ENCODE measurements at regions of chr17 and their contacts with region 1.

Region 1: GRCh38 chr17:12545877-12546513 is 119.7 kb upstream of the MYOCD start:
- DNase-seq: peak in 3 of 5 donors; percentile 28 to 47 (median 30)
- ATAC-seq: peak in 3 of 4 donors; percentile 77 to 88 (median 80)
- H3K4me3 ChIP-seq: no peak overlapping the region
- H3K27ac ChIP-seq: no peak overlapping the region
- H3K4me1 ChIP-seq: peaks cover 0 to 10% (median 0%) of the 10 kb centered on the region in 12 donors
- H3K27me3 ChIP-seq: no peaks in the 10 kb centered on the region
- CTCF ChIP-seq: peak; percentile 51 to 79 (median 70)
- POLR2A ChIP-seq: no peak

Region 2: GRCh38 chr17:12256380-12256995 is 289.5 kb before region 1 on chr17:
- intact Hi-C with region 1: loop called in 7 of 10 experiments (anchors 5 to 10 kb)
- DNase-seq: peak in 3 of 5 donors; percentile 26 to 43 (median 29)
- ATAC-seq: peak; percentile 54 to 79 (median 72)
- H3K4me3 ChIP-seq: no peak overlapping the region
- H3K27ac ChIP-seq: peak overlapping the region in 1 of 12 donors; percentile 2
- H3K4me1 ChIP-seq: peaks cover 0 to 21% (median 0%) of the 10 kb centered on the region in 12 donors
- H3K27me3 ChIP-seq: no peaks in the 10 kb centered on the region
- CTCF ChIP-seq: peak; percentile 65 to 81 (median 75)
- POLR2A ChIP-seq: no peak

Region 3: DNA sequence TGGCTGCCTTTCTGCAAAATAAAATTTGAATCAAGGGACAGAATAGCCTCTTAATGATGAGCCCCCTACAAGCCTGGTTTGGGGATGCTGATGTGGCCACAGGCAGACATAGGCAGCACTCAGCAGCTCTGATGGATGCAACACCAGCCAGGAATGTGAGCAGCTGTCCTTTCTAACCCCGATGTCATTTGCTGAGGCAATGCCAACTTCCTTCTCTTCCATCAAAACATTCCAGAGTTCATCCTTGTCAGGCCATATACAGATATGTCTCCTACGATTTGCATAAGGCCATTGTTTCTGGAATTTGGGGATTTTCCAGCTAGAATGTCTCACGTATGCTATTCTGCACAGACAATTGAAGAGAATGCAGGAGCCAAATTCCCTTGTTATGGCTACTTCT is 67.6 kb after region 1 on chr17:
- intact Hi-C with region 1: loop called in 1 of 10 experiments (anchors 10 kb)
- DNase-seq: no peak
- ATAC-seq: no peak
- H3K4me3 ChIP-seq: no peak overlapping the region
- H3K27ac ChIP-seq: no peak overlapping the region
- H3K4me1 ChIP-seq: no peaks in the 10 kb centered on the region
- H3K27me3 ChIP-seq: no peaks in the 10 kb centered on the region
- CTCF ChIP-seq: no peak
- POLR2A ChIP-seq: no peak

Region 4: GRCh38 chr17:12627177-12627629 is 81.2 kb after region 1 on chr17:
- intact Hi-C with region 1: loop called in 1 of 10 experiments (anchors 10 kb)
- DNase-seq: peak in 3 of 5 donors; percentile 23 to 44 (median 32)
- ATAC-seq: peak in 3 of 4 donors; percentile 73 to 84 (median 84)
- H3K4me3 ChIP-seq: no peak overlapping the region
- H3K27ac ChIP-seq: peak overlapping the region in 8 of 12 donors; percentile 28 to 65 (median 45)
- H3K4me1 ChIP-seq: peaks cover 0 to 26% (median 0%) of the 10 kb centered on the region in 12 donors
- H3K27me3 ChIP-seq: no peaks in the 10 kb centered on the region
- CTCF ChIP-seq: no peak
- POLR2A ChIP-seq: no peak

Region 5: GRCh38 chr17:12673788-12674187 is 127.8 kb after region 1 on chr17:
- intact Hi-C with region 1: loop called in 2 of 10 experiments (anchors 2 to 5 kb)
- DNase-seq: no peak
- ATAC-seq: peak in 2 of 4 donors; percentile 43 to 57
- H3K4me3 ChIP-seq: no peak overlapping the region
- H3K27ac ChIP-seq: peak overlapping the region in 2 of 12 donors; percentile 40 to 89
- H3K4me1 ChIP-seq: peaks cover 0 to 44% (median 12%) of the 10 kb centered on the region in 12 donors
- H3K27me3 ChIP-seq: no peaks in the 10 kb centered on the region
- CTCF ChIP-seq: no peak
- POLR2A ChIP-seq: no peak

Region 6: DNA sequence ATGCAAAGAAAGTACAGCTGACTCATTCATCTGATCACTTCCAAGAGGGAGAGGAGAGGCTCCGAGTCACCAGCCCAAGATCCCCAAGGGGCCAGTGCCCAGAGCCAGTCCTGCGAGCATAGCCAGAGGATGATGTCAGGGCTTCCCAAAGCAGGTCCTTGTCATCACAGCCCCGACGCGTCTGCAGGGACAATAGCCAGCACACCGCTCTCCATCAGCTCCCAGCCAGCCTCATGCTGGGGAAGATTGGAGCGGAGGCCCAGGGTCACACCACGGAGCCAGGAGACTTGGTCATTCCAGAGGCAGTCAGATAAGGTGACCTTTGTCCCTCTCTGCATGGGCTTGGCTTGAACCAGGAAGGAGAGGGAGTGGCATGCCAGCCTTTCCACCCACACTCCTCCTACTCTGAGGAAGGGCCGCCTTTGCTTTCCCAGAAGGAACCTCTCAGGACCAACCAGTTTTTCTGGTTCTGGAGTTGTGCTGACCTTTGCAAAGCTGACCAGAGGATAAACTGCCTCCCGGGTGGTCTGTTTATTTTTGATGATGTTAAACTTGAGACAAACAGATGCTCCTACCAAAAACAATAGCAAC is 185.0 kb after region 1 on chr17:
- intact Hi-C with region 1: loop called in 3 of 10 experiments (anchors 5 to 10 kb)
- DNase-seq: peak; percentile 85 to 96 (median 85)
- ATAC-seq: peak; percentile 83 to 87 (median 84)
- H3K4me3 ChIP-seq: peak overlapping the region in 2 of 12 donors; percentile 1 to 10
- H3K27ac ChIP-seq: peak overlapping the region; percentile 37 to 93 (median 82)
- H3K4me1 ChIP-seq: peaks cover 0 to 63% (median 17%) of the 10 kb centered on the region in 12 donors
- H3K27me3 ChIP-seq: no peaks in the 10 kb centered on the region
- CTCF ChIP-seq: no peak
- POLR2A ChIP-seq: no peak

Region 7: GRCh38 chr17:12744298-12744697 is 198.3 kb after region 1 on chr17:
- intact Hi-C with region 1: loop called in 9 of 10 experiments (anchors 2 to 10 kb)
- DNase-seq: peak in 4 of 5 donors; percentile 64 to 86 (median 73)
- ATAC-seq: peak; percentile 92 to 95 (median 94)
- H3K4me3 ChIP-seq: peak overlapping the region in 7 of 12 donors; percentile 16 to 46 (median 38)
- H3K27ac ChIP-seq: peak overlapping the region; percentile 44 to 88 (median 74)
- H3K4me1 ChIP-seq: peaks cover 0 to 30% (median 6%) of the 10 kb centered on the region in 12 donors
- H3K27me3 ChIP-seq: no peaks in the 10 kb centered on the region
- CTCF ChIP-seq: no peak
- POLR2A ChIP-seq: peak in 1 of 2 donors; percentile 27